Right lobe of liver (tissue), 6 donors: ENCODE measurements at regions of chr21 and their contacts with region 1.

Region 1: GRCh38 chr21:33199516-33200217 is 30.1 kb upstream of the IFNAR2 start:
- DNase-seq: peak in 2 of 3 donors; percentile 43 to 83
- ATAC-seq: peak; percentile 66 to 78 (median 70)
- H3K4me3 ChIP-seq: no peak overlapping the region
- H3K27ac ChIP-seq: peak overlapping the region; percentile 5 to 64 (median 55)
- H3K4me1 ChIP-seq: peaks cover 0 to 45% (median 14%) of the 10 kb centered on the region in 4 donors
- H3K27me3 ChIP-seq: no peaks in the 10 kb centered on the region
- CTCF ChIP-seq: peak; percentile 74 to 96 (median 88)
- POLR2A ChIP-seq: no peak

Region 2: GRCh38 chr21:33059380-33059841 is 140.3 kb before region 1 on chr21:
- intact Hi-C with region 1: no loop called
- DNase-seq: peak in 2 of 3 donors; percentile 71 to 81
- ATAC-seq: peak; percentile 83 to 89 (median 88)
- H3K4me3 ChIP-seq: no peak overlapping the region
- H3K27ac ChIP-seq: peak overlapping the region in 1 of 3 donors; percentile 33
- H3K4me1 ChIP-seq: peaks cover 0 to 22% (median 10%) of the 10 kb centered on the region in 4 donors
- H3K27me3 ChIP-seq: no peaks in the 10 kb centered on the region
- CTCF ChIP-seq: no peak
- POLR2A ChIP-seq: no peak

Region 3: DNA sequence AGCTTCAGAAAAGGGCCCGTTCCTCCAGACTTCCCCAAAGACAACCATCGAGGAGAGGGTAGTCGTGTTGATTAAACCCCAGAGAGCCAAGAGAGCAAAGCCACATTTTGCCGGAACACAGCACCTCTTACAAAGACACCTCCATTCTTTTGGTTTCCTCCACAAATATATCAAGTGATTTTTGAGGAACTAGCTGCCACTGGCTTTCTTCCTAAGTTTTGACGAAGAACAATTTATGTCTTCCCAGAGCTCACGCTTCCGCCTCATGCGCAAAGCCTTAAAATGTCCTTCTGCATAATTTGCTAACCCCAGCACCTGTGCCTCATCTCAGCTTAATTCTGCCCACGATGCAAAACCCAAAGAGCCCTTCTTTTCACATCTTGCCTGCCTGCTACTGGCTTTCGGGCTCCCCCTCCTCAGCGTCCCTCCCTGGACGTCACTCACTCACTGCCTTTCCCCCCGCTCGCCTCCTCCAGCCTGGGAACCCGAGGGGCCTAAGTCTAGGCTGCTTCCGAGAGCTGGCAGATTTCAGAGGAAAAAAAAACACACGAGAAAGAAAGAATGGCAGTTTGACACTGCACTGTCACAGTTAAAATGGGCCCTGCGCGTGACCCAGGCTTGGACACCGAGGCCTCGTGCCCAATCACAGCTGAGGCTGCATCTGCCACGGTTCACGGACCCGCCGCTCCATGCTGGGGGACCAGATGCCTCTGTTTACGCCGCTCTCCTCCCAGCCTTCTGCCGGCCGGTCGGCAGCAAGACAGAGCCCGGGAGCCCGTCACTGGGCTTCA is 47.5 kb before region 1 on chr21:
- intact Hi-C with region 1: no loop called
- DNase-seq: no peak
- ATAC-seq: no peak
- H3K4me3 ChIP-seq: no peak overlapping the region
- H3K27ac ChIP-seq: no peak overlapping the region
- H3K4me1 ChIP-seq: no peaks in the 10 kb centered on the region
- H3K27me3 ChIP-seq: no peaks in the 10 kb centered on the region
- CTCF ChIP-seq: no peak
- POLR2A ChIP-seq: no peak

Region 4: DNA sequence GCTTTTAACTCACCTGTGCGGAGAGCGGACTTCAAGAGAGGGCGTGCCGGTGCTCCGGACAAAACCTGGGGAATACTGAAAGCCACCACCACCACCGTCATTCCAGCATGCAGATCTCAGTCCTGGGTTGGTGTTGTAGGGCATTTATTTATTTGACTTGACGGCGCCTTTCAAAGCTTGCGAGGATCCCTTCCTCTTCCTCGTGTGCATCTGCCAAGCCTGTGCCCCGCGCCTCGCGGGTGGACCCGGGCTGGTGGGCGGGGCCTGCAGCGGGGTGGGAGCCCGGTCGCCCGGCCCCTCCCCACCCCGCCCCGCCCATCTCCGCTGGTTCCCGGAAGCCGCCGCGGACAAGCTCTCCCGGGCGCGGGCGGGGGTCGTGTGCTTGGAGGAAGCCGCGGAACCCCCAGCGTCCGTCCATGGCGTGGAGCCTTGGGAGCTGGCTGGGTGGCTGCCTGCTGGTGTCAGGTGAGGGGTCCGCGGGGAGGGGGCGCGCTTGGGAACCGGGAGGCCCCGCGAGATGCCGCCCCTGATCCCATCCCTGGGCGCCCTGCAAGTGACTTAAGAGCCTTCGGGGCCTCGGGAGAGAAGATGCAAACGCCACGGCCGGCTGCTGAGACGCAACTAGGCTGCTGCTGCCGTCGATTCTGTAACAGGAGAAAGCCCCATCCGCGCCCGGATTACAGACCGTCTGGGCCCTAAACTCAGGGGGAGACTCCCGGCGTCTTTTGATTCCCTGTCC is 66.6 kb after region 1 on chr21 and contains the start of gene IL10RB:
- intact Hi-C with region 1: loop called in 1 of 2 experiments (anchors 10 kb)
- DNase-seq: peak; percentile 83 to 88 (median 87)
- ATAC-seq: peak; percentile 80 to 92 (median 86)
- H3K4me3 ChIP-seq: peak within 1 kb of the TSS; percentile 84 to 88 (median 87)
- H3K27ac ChIP-seq: peak within 1 kb of the TSS; percentile 80 to 90 (median 81)
- H3K4me1 ChIP-seq: peaks cover 0 to 32% (median 10%) of the 10 kb centered on the region in 4 donors
- H3K27me3 ChIP-seq: no peaks in the 10 kb centered on the region
- CTCF ChIP-seq: no peak
- POLR2A ChIP-seq: peak; percentile 53
- total RNA-seq, gene IL10RB: 10.5 to 24.2 (median 20.3) TPM

Region 5: DNA sequence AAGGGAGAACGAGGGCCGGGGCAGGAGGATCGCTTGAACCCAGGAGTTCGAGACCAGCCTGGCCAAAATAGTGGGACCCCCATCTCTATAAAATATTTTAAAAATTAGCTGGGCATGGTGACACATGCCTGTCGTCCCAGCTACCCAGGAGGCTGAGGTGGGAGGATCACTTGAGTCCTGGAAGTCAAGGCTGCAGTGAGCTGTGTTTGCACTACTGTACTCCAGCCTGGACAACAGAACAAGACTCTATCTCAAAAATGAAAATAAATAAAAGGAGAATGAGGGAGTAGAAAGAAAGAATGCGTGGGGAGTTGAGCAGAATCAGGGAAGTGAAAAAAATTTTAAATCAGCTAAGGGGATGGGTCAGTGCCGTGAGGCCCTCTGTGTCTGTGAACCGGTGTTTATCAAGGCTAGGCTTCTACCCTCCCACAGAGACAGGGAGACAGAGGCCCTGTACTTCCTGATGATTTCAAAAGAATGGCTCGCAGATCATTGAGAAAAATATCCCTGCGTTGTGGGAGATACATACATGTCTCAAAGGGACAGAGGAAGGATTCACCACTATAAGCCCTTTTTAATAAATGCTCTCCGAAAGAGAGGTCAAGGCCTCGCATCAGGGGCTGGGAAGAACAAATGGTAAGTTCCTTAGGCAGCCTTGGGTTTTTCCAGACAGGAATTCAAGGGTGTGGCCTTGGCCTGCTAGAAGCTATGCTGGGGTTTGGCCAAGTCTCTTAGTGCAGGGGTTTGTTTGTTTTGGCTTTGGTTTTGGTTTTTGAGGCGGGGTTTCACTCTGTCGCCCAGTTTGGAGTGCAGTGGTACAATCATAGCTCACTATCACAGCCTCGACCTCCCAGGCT is 87.2 kb after region 1 on chr21:
- intact Hi-C with region 1: no loop called
- DNase-seq: peak in 1 of 3 donors; percentile 79
- ATAC-seq: peak; percentile 50 to 65 (median 56)
- H3K4me3 ChIP-seq: no peak overlapping the region
- H3K27ac ChIP-seq: peak overlapping the region; percentile 14 to 84 (median 61)
- H3K4me1 ChIP-seq: peaks cover 0 to 42% (median 16%) of the 10 kb centered on the region in 4 donors
- H3K27me3 ChIP-seq: no peaks in the 10 kb centered on the region
- CTCF ChIP-seq: no peak
- POLR2A ChIP-seq: no peak